ENCODE measurements at regions of chr17 and their contacts with region 1.

Region 1: GRCh38 chr17:55198690-55199370 is 65.9 kb upstream of the HLF start:
- DNase-seq: peak; percentile 49
- H3K4me3 ChIP-seq: peak overlapping the region in 1 of 2 experiments; percentile 4; a peak in 1 of 4 replicates
- H3K27ac ChIP-seq: peak overlapping the region; percentile 4 to 92; a peak in 3 of 4 replicates
- H3K4me1 ChIP-seq: peaks cover 20 to 35% of the 10 kb centered on the region in 2 experiments; a peak in 3 of 4 replicates
- H3K27me3 ChIP-seq: no peaks in the 10 kb centered on the region
- CTCF ChIP-seq: no peak
- EP300 ChIP-seq: peak in 1 of 2 experiments; percentile 84; a peak in 1 of 4 replicates
- RAD21 ChIP-seq: 0 out of 2 replicates have a peak, but pooled peaks have one; percentile 18

Region 2: GRCh38 chr17:55210292-55210691 is 11.5 kb after region 1 on chr17:
- CTCF ChIA-PET with region 1: interaction called, 18 read pairs
- POLR2A ChIA-PET with region 1: no interaction called
- DNase-seq: peak; percentile 39
- H3K4me3 ChIP-seq: no peak overlapping the region
- H3K27ac ChIP-seq: peak overlapping the region in 1 of 2 experiments; percentile 77; a peak in 2 of 4 replicates
- H3K4me1 ChIP-seq: peaks cover 3 to 14% of the 10 kb centered on the region in 2 experiments; a peak in 3 of 4 replicates
- H3K27me3 ChIP-seq: no peaks in the 10 kb centered on the region
- CTCF ChIP-seq: no peak
- EP300 ChIP-seq: peak in 1 of 2 experiments; percentile 58; a peak in 2 of 4 replicates
- RAD21 ChIP-seq: no peak; the same call in 1 of the 2 replicates

Region 3: DNA sequence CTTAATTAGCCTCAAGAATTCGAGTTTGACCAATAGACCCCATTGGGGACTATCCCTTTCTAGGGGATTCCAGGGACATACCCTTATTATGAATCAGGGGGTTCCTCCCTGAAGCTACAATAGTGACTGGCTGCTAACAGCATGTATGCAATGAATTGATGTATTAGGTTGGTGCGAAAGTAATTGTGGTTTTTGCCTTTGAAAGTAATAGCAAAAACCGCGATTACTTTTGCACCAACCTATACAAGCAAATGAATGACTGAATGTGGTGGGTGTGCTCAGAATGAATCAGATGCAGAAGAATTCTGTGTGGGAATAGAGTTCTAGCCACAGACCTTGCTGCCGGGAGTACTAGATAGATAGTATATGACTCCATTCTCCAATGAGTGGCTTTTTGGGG is 142.6 kb after region 1 on chr17:
- CTCF ChIA-PET with region 1: no interaction called
- POLR2A ChIA-PET with region 1: no interaction called
- DNase-seq: no peak
- H3K4me3 ChIP-seq: no peak overlapping the region
- H3K27ac ChIP-seq: no peak overlapping the region
- H3K4me1 ChIP-seq: peaks cover 0 to 3% of the 10 kb centered on the region in 2 experiments; a peak in 1 of 4 replicates
- H3K27me3 ChIP-seq: no peaks in the 10 kb centered on the region
- CTCF ChIP-seq: no peak
- EP300 ChIP-seq: no peak
- RAD21 ChIP-seq: no peak

Measured in SK-N-SH (cell line).